ENCODE measurements at regions of chr1 and their contacts with region 1.

Region 1: DNA sequence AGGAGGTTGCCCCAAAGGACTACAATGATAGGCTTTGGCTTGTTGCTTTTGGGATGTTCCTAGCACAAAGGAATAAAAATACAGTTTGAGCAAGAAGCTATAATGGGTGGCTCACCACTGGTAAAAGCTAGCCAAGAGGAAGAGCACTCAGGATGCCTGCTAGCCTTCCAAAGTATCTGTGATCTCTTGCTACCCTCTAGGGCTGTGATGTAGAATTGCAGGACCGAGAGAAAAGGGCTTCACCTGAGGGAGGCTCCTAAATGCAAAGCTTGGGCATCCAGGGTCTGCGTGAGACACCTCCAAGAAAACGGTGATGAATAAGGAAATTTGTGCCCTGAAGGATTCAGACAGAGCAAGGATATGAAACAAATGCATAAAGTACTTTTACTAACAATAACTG is 17.7 kb downstream of the IVL start:
- DNase-seq: peak; percentile 52
- CTCF ChIP-seq: peak; percentile 65

Region 2: DNA sequence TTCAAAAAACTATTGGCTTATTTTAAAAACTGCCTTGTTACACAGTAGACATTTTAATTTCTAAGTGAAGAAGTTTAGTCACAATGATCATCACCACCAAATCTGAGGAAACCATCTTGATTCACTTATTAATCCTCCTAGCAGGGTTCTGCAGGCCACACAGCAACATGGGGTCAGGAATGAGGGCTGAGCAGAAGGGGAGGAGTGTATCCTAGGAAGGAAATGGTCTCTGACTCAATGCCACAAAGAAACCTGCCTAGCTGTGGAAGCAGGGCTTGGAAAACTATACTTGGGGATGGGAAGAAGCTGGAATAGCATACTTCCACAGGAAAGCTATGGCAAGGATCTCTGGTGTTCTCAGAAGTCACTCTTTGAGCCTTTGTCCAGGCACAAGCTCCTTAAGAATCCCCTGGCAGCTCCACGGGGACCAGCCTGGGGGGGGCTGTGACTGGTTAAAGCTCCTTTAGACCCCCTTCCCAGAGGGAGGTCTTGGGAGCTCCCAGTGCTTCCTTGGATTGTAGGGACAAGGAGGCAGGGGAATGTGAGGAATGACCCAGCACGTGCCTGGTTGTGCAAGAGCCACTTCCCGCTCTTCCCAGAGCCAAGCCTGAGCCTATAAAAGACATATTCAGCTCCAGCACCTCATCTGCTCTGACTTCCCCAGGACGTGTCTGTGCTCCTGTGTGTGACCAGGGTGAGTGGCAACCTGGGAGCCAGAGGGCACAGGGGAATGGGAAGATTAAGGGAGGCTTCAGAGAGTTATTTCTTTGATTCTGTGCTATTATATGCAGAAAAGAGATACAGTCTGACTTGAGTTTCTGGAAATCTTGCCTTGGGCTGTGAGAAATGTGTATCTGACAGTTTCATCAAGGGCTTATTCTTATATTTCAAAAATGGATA is 228.1 kb before region 1 on chr1 and contains the start of gene LCE2A:
- CTCF ChIA-PET with region 1: no interaction called
- POLR2A ChIA-PET with region 1: no interaction called
- DNase-seq: no peak
- CTCF ChIP-seq: no peak

Region 3: GRCh38 chr1:152786077-152786476 is 140.0 kb before region 1 on chr1 and contains the start of gene LCE1E:
- CTCF ChIA-PET with region 1: no interaction called
- POLR2A ChIA-PET with region 1: no interaction called
- DNase-seq: no peak
- CTCF ChIP-seq: no peak

Region 4: GRCh38 chr1:152855661-152856060 is 70.4 kb before region 1 on chr1:
- CTCF ChIA-PET with region 1: interaction called, 10 read pairs
- POLR2A ChIA-PET with region 1: no interaction called
- DNase-seq: no peak
- CTCF ChIP-seq: no peak

Region 5: DNA sequence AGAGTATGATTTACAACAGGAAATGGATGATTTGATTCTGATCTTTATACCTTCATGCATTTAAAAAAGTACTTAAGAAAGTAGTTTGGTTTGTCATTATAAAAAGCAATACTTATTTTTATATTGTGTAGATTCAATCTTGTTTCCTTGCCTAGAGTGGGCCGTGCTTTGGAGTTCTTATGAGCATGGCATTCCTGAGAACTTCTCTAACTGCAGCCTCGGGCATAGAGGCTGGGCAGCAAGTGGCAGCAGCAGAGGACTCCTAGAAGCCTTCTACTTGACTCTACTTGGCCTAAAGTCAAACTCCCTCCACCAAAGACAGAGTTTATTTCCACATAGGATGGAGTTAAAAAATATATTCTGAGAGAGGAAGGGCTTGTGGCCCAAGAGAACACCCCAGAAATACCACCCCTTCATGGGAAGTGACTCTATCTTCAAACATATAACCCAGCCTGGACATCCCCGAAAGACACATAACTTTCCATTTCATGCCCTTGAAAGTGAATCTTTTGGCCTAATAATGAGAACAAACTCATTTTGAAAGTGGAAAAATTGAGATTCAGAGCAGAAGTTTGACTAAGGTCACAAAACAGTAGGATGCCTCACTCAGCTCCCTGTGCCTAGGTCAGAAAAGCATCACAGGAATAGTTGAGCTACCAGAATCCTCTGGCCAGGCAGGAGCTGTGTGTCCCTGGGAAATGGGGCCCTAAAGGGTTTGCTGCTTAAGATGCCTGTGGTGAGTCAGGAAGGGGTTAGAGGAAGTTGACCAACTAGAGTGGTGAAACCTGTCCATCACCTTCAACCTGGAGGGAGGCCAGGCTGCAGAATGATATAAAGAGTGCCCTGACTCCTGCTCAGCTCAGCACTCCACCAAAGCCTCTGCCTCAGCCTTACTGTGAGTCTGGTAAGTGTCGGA is 18.1 kb before region 1 on chr1 and contains the start of gene IVL:
- CTCF ChIA-PET with region 1: interaction called, 30 read pairs
- POLR2A ChIA-PET with region 1: no interaction called
- DNase-seq: peak; percentile 65
- CTCF ChIP-seq: no peak

Region 6: DNA sequence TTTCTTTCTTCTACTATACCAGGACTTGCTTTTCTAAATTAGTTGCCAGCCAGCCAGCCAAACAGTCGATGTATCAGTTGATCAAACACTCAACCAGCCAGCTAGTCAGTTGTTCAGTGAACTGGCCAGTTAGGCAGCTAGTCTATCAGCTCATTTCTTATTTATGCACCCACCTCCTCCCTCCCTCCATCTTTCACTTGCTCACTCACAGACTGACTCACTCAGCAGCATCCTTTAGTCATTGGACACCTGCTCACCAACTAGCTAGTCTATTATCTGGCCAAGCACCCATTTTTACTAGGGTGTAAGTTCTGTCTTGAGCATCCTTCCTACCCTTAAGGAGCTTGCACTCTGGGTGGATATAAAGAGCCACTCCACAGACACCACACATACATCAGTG is 38.4 kb after region 1 on chr1:
- CTCF ChIA-PET with region 1: interaction called, 10 read pairs
- POLR2A ChIA-PET with region 1: no interaction called
- DNase-seq: no peak
- CTCF ChIP-seq: no peak

Region 7: GRCh38 chr1:153081736-153082135 is 155.6 kb after region 1 on chr1:
- CTCF ChIA-PET with region 1: no interaction called
- POLR2A ChIA-PET with region 1: no interaction called
- DNase-seq: no peak
- CTCF ChIP-seq: no peak

Measured in GM10248 (cell line).